ENCODE measurements at regions of chr1 and their contacts with region 1.

Region 1: GRCh38 chr1:167442124-167442848 is 76.0 kb downstream of the CD247 start:
- DNase-seq: peak; percentile 68 to 94 (median 82)
- ATAC-seq: peak; percentile 89 to 98 (median 94)
- H3K4me3 ChIP-seq: no peak overlapping the region
- H3K27ac ChIP-seq: no peak overlapping the region
- H3K4me1 ChIP-seq: peaks cover 0 to 5% (median 0%) of the 10 kb centered on the region in 3 donors
- H3K27me3 ChIP-seq: no peaks in the 10 kb centered on the region
- CTCF ChIP-seq: peak; percentile 61 to 74 (median 71)

Region 2: DNA sequence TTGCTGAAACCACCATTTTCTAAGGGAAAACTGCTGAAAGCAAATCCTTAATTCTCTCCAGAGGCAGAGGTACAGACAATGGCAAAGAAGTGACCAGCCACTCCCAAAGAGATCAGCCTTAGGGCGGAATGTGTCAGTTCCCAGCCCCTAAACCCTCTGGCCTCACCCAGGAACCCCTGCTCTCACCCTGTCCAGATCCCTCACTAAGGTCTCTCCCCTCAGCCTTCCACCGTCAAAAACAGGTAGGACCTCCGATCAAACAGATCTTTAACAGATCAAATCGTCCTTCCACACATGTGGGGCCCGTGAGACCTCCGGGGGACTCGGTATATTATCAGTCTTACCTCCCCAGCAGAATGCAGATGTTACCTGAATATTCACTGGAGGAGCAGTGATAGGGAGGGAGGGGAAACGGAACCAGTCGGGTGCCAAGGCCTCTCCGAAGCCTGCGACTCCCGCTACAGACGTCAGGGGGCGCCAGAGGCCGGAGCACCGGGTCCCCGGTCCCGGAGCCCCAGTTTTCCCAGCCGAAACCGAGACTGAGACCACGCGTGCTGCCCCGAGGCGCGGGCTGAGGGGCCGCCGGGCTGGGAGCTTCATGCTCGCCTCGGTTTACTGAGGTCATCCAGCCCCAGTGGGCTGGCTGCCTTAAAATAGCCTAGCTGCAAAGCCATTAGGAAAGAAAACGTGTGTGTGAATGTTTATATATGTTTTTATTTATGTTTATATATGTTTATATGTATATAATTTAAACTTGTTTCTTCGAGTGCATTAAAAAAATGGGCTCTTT is 375.8 kb before region 1 on chr1:
- intact Hi-C with region 1: loop called (anchors 5 to 10 kb)
- DNase-seq: peak; percentile 48 to 96 (median 78)
- ATAC-seq: peak; percentile 89 to 100 (median 98)
- H3K4me3 ChIP-seq: peak overlapping the region in 1 of 4 donors; percentile 22
- H3K27ac ChIP-seq: no peak overlapping the region
- H3K4me1 ChIP-seq: peaks cover 0 to 3% (median 0%) of the 10 kb centered on the region in 3 donors
- H3K27me3 ChIP-seq: no peaks in the 10 kb centered on the region
- CTCF ChIP-seq: peak; percentile 88 to 97 (median 96)

Region 3: DNA sequence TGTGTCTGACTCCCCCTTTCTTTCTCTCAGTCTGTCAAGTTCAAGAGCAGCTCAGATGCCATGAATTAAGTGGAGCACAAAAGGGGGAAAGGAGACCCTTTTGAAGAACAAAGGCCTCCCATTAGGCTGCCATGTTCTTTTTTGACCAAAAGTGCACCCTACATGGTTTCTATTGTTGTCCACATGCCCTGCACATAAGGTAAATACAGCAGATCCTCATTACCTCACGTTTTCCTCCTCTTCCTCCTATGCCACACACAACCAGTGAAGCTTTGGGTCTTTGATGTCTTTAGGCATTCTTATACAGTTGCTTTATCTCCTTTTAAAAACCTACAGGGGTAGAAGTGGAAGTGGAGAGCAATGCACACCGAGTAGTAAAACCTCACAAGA is 173.9 kb before region 1 on chr1:
- intact Hi-C with region 1: loop called in 1 of 3 experiments (anchors 5 kb)
- DNase-seq: no peak
- ATAC-seq: no peak
- H3K4me3 ChIP-seq: no peak overlapping the region
- H3K27ac ChIP-seq: no peak overlapping the region
- H3K4me1 ChIP-seq: peaks cover 0 to 8% (median 0%) of the 10 kb centered on the region in 3 donors
- H3K27me3 ChIP-seq: no peaks in the 10 kb centered on the region
- CTCF ChIP-seq: no peak

Region 4: GRCh38 chr1:167401260-167401873 is 40.9 kb before region 1 on chr1:
- intact Hi-C with region 1: loop called in 1 of 3 experiments (anchors 5 kb)
- DNase-seq: peak; percentile 50 to 74 (median 56)
- ATAC-seq: peak; percentile 90 to 100 (median 98)
- H3K4me3 ChIP-seq: no peak overlapping the region
- H3K27ac ChIP-seq: no peak overlapping the region
- H3K4me1 ChIP-seq: no peaks in the 10 kb centered on the region
- H3K27me3 ChIP-seq: no peaks in the 10 kb centered on the region
- CTCF ChIP-seq: peak in 3 of 4 donors; percentile 10 to 47 (median 42)